Caco-2 (cell line): ENCODE measurements at regions of chr12 and their contacts with region 1.

Region 1: DNA sequence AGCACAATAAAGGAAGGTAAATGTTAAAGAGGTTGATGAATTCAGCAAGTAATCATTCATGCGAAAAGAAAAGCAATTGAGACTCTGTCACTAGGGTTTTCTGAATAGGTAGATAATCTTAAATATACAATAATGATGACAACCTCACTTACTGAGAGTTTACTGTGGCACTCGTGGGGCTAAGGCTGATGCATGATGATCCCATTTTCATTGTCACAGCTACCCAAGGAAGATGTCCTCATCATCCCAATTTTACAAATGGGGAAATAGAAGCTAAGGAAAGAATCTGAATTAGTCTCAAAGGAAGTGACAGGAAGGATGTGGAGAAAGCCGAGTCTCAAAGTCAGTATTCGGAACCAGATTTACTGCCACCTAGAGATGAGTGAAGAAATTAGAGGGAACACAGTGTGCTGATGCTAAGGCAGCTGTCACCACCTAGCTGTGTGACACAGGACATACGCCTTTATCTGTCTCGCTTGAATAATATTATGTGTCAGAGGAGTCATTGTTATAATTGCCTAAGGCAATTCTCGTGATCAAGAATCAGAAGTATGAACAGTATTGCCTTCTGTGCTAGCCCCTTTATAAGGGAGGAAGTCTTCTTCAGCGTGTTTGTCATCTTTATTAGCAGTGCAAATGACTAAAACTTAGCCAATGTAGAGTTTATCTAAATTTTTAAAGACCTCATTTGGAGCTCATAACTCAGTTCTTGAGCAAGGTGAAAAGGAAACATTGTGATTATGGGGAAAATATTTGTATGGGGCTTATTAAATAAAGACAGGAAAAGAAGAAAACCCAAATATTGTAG is 63.2 kb downstream of the ERGIC2 start:
- DNase-seq: peak; percentile 65 to 71
- H3K4me3 ChIP-seq: no peak overlapping the region
- H3K4me3 Mint-ChIP-seq: no peak overlapping the region
- H3K27ac Mint-ChIP-seq: no peak overlapping the region
- H3K4me1 ChIP-seq: peaks cover 15% of the 10 kb centered on the region
- H3K4me1 Mint-ChIP-seq: peaks cover 16% of the 10 kb centered on the region
- H3K27me3 ChIP-seq: no peaks in the 10 kb centered on the region
- H3K27me3 Mint-ChIP-seq: no peaks in the 10 kb centered on the region
- CTCF ChIP-seq: peak; percentile 94 to 97

Region 2: DNA sequence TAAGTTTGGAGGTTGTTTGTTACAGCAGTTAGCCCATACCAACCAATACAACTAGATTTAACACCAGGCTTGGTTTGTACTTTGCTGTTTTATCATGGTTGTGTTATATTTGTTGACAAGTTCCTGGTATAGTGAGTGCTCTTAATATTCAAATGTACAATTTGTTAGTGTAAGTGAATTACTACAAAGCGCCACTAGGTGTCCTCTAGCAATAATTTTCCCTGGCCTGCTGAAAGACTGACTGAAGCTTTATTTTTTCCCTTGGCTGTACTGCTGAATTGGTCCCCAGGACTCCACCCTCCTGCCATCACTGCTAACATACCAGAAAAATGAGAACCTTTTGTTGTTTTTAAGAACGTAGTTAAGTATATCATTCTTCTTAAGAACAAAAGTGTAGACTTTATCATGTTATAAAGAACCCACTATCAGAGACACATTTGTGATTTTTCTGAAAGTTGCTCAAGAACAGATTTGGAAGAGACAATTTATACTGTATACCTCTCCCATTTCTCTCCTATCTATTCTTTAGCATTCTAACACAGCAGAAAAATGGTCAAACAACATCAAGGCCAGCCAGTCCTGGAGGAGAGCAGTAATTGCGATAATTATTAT is 244.0 kb before region 1 on chr12:
- CTCF ChIA-PET with region 1: interaction called, 18 read pairs
- POLR2A ChIA-PET with region 1: no interaction called
- intact Hi-C with region 1: loop called (anchors 1 kb)
- DNase-seq: peak in 1 of 2 experiments; percentile 57
- H3K4me3 ChIP-seq: no peak overlapping the region
- H3K4me3 Mint-ChIP-seq: no peak overlapping the region
- H3K27ac Mint-ChIP-seq: no peak overlapping the region
- H3K4me1 ChIP-seq: no peaks in the 10 kb centered on the region
- H3K4me1 Mint-ChIP-seq: peaks cover 6% of the 10 kb centered on the region
- H3K27me3 ChIP-seq: no peaks in the 10 kb centered on the region
- H3K27me3 Mint-ChIP-seq: peaks cover 2% of the 10 kb centered on the region
- CTCF ChIP-seq: peak; percentile 74 to 84

Region 3: DNA sequence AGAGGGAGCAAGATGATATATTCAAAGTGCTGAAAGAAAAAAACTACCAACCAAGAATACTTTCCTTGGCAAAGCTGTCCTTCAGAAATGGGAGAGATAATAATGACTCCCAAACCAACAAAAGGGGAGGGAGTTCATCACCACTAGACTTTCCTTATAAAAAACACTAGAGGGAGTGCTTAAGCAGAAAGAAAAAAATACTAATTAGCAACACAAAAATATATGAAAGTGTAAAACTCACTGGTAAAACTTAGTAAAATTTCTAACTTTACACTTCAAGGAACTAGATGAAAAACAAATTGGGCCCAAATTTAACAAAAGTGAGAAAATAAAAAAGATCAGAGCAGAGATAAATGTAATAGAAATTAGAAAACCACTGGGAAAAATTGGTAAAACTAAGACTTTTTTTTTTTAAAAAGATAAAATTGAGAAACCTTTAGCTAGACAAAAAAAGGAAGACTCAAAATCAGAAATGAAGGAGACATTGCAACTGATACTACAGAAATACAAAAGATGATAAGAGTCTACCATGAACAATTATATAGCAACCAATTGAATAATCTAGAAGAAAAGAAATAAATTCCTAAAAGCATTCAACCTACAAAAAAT is 229.0 kb before region 1 on chr12:
- CTCF ChIA-PET with region 1: interaction called, 11 read pairs
- POLR2A ChIA-PET with region 1: no interaction called
- intact Hi-C with region 1: loop called (anchors 1 kb)
- DNase-seq: no peak
- H3K4me3 ChIP-seq: no peak overlapping the region
- H3K4me3 Mint-ChIP-seq: no peak overlapping the region
- H3K27ac Mint-ChIP-seq: no peak overlapping the region
- H3K4me1 ChIP-seq: no peaks in the 10 kb centered on the region
- H3K4me1 Mint-ChIP-seq: no peaks in the 10 kb centered on the region
- H3K27me3 ChIP-seq: no peaks in the 10 kb centered on the region
- H3K27me3 Mint-ChIP-seq: peaks cover 2% of the 10 kb centered on the region
- CTCF ChIP-seq: peak; percentile 37 to 64

Region 4: DNA sequence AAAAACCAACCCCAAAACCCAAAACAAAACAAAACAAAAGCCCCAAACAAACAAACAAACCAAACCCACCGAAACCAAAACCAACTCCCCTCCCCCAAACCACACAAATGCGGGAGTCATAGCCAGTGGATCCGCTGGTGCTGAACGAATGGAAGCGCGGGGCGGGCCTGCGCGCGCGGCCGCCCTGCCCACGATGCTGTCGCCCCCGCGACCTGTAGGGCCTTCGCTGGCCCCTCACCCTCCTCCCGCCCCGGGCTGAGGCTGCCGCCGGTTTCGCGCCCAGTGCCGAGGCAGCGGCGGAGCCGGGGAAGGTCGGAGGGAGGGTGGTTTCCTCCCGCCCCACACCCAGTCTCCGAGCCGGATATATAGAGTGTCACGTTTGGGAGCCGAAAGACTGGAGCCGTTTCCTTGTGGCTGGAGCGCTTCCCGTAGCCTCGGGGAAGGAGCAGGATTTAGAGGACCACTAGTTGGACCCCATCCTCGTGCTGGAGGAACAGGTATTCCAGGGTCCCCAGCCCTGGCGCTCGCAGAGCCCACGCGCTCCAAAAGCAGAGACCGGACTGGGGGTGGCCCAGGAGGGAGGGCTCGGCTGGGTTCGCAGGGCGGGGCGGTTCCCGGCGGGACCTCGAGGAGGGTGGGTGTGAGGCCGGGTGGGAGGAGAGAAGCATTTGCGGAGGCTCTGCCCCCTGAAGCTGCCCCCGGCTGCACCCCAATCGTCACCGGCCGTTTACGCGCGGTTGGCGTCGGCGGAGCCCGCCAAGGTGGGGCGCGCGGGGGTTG is 168.7 kb before region 1 on chr12 and contains the start of gene FAR2:
- CTCF ChIA-PET with region 1: no interaction called
- POLR2A ChIA-PET with region 1: no interaction called
- intact Hi-C with region 1: loop called (anchors 5 kb)
- DNase-seq: peak; percentile 57 to 78
- H3K4me3 ChIP-seq: peak within 1 kb of the TSS; percentile 55
- H3K4me3 Mint-ChIP-seq: peak within 1 kb of the TSS; percentile 96
- H3K27ac Mint-ChIP-seq: peak within 1 kb of the TSS; percentile 96
- H3K4me1 ChIP-seq: no peaks in the 10 kb centered on the region; the same call in 1 of the 2 replicates
- H3K4me1 Mint-ChIP-seq: peaks cover 16% of the 10 kb centered on the region
- H3K27me3 ChIP-seq: no peaks in the 10 kb centered on the region
- H3K27me3 Mint-ChIP-seq: peaks cover 9% of the 10 kb centered on the region
- CTCF ChIP-seq: no peak
- total RNA-seq, gene FAR2: 6.6 and 8.2 TPM in 2 replicates

Region 5: GRCh38 chr12:29207120-29207519 is 110.6 kb before region 1 on chr12:
- CTCF ChIA-PET with region 1: no interaction called
- POLR2A ChIA-PET with region 1: no interaction called
- intact Hi-C with region 1: loop called (anchors 1 kb)
- DNase-seq: no peak
- H3K4me3 ChIP-seq: no peak overlapping the region
- H3K4me3 Mint-ChIP-seq: no peak overlapping the region
- H3K27ac Mint-ChIP-seq: no peak overlapping the region
- H3K4me1 ChIP-seq: peaks cover 25% of the 10 kb centered on the region
- H3K4me1 Mint-ChIP-seq: peaks cover 14% of the 10 kb centered on the region
- H3K27me3 ChIP-seq: no peaks in the 10 kb centered on the region
- H3K27me3 Mint-ChIP-seq: no peaks in the 10 kb centered on the region
- CTCF ChIP-seq: no peak

Region 6: GRCh38 chr12:29226616-29227015 is 91.1 kb before region 1 on chr12:
- CTCF ChIA-PET with region 1: no interaction called
- POLR2A ChIA-PET with region 1: no interaction called
- intact Hi-C with region 1: loop called (anchors 5 kb)
- DNase-seq: no peak
- H3K4me3 ChIP-seq: no peak overlapping the region
- H3K4me3 Mint-ChIP-seq: no peak overlapping the region
- H3K27ac Mint-ChIP-seq: no peak overlapping the region
- H3K4me1 ChIP-seq: peaks cover 31% of the 10 kb centered on the region
- H3K4me1 Mint-ChIP-seq: peaks cover 16% of the 10 kb centered on the region
- H3K27me3 ChIP-seq: no peaks in the 10 kb centered on the region
- H3K27me3 Mint-ChIP-seq: no peaks in the 10 kb centered on the region
- CTCF ChIP-seq: no peak

Region 7: DNA sequence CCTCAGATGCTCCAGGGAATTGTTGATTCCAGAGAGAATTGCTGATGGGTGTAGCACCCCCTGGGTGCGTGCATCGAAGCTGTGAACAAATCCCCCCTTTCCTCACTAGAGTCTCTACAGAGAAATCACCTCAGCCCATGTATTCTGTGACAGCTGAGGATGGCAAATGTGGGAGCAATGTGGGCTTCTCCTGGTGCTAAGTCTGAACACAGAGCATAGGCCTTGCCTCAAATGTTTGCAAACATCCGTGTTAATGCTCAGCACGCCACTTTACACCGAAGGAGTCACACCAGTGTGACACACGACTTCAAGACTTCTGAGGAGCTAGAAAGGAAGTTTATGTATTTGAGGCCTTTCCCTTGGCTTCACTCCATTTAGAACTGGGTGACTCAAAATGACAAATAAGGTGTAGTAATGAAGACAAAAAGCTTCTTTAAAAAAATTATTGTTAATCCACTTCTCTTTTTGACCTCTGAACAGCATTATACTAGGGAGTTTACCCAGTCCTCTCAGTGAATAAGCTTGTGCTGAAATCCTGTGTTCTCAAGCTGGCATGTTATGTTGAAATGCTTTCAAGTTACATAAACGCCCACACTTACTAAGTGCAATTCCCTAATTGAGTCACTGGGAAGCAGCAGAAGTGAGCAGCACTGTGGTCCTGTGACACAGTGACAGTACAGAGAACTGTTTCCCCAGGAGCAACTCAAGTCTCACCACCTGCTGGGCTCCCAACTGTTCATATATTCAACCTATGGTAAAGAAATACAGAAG is 75.8 kb before region 1 on chr12:
- CTCF ChIA-PET with region 1: no interaction called
- POLR2A ChIA-PET with region 1: no interaction called
- intact Hi-C with region 1: loop called (anchors 1 kb)
- DNase-seq: peak in 1 of 2 experiments; percentile 37
- H3K4me3 ChIP-seq: no peak overlapping the region
- H3K4me3 Mint-ChIP-seq: no peak overlapping the region
- H3K27ac Mint-ChIP-seq: no peak overlapping the region
- H3K4me1 ChIP-seq: no peaks in the 10 kb centered on the region
- H3K4me1 Mint-ChIP-seq: peaks cover 7% of the 10 kb centered on the region
- H3K27me3 ChIP-seq: no peaks in the 10 kb centered on the region; the same call in 1 of the 2 replicates
- H3K27me3 Mint-ChIP-seq: no peaks in the 10 kb centered on the region
- CTCF ChIP-seq: peak in 1 of 2 experiments; percentile 29

Region 8: GRCh38 chr12:29255042-29255441 is 62.7 kb before region 1 on chr12:
- CTCF ChIA-PET with region 1: no interaction called
- POLR2A ChIA-PET with region 1: no interaction called
- intact Hi-C with region 1: no loop called
- DNase-seq: no peak
- H3K4me3 ChIP-seq: no peak overlapping the region
- H3K4me3 Mint-ChIP-seq: no peak overlapping the region
- H3K27ac Mint-ChIP-seq: no peak overlapping the region
- H3K4me1 ChIP-seq: no peaks in the 10 kb centered on the region
- H3K4me1 Mint-ChIP-seq: no peaks in the 10 kb centered on the region
- H3K27me3 ChIP-seq: no peaks in the 10 kb centered on the region
- H3K27me3 Mint-ChIP-seq: no peaks in the 10 kb centered on the region
- CTCF ChIP-seq: no peak